GM12878 (cell line): ENCODE measurements at regions of chr17 and their contacts with region 1.

Region 1: DNA sequence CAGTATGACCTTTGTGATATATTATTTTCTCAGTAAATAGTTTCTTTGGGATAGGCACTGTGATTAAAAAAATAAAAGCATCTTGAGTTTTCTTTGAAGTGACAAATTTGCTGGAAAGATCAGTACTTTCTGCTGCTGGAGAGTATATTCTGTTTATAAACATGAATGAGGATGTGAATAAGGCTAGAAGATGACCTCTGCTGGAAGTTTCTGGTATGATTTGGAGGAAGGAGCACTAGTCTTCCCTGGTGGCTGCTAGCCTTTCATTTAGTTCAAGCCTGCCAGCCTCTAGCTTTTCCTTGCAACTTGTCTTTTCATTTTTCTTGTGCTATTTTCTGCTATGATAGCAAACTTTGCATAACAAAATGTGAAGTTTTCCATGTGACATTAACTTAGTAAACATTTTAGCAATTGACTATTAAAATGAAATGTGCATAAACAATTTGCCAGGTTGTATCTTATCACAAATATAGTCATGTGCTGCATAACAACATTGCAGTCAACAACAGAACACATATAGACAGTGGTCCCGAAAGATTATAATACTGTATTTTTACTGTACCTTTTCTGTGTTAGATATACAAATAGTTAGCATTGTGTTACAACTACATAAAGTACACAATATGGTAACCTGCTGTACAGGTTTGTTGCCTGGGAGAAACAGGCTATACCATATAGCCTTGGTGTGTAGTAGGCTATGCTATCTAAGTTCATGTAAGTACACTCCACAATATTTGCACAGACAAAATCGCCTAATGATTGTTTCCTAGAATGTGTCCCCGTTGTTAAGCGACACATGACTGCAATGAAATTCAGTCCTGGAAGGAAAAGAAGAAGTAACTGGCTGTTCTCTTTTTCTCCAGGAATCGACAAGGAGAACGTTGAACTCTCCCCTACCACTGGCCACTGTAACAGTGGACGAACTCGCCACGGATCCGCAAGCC is 18.1 kb upstream of the RAB11FIP4 start:
- DNase-seq: peak; percentile 31
- ATAC-seq: peak; percentile 92
- H3K4me3 ChIP-seq: no peak overlapping the region
- H3K27ac ChIP-seq: no peak overlapping the region
- H3K4me1 ChIP-seq: peaks cover 16% of the 10 kb centered on the region
- H3K27me3 ChIP-seq: no peaks in the 10 kb centered on the region
- CTCF ChIP-seq: peak; percentile 61 to 73 (median 70)
- EP300 ChIP-seq: no peak
- POLR2A ChIP-seq: no peak
- RAD21 ChIP-seq: peak; percentile 76

Region 2: GRCh38 chr17:31015639-31016038 is 357.8 kb before region 1 on chr17:
- CTCF ChIA-PET with region 1: interaction called, 5 read pairs
- POLR2A ChIA-PET with region 1: no interaction called
- RAD21 ChIA-PET with region 1: interaction called, 8 read pairs
- SMC1A ChIA-PET with region 1: interaction called, 4 read pairs
- in situ Hi-C with region 1: loop called (anchors 5 kb)
- intact Hi-C with region 1: loop called (anchors 5 kb)
- DNase-seq: no peak
- ATAC-seq: peak; percentile 30; the same call in 1 of the 3 replicates
- H3K4me3 ChIP-seq: no peak overlapping the region
- H3K27ac ChIP-seq: no peak overlapping the region
- H3K4me1 ChIP-seq: no peaks in the 10 kb centered on the region
- H3K27me3 ChIP-seq: no peaks in the 10 kb centered on the region
- CTCF ChIP-seq: peak in 1 of 3 experiments; percentile 13; a peak in 1 of 6 replicates
- EP300 ChIP-seq: no peak
- POLR2A ChIP-seq: no peak
- RAD21 ChIP-seq: peak; percentile 32; the same call in 1 of the 2 replicates

Region 3: DNA sequence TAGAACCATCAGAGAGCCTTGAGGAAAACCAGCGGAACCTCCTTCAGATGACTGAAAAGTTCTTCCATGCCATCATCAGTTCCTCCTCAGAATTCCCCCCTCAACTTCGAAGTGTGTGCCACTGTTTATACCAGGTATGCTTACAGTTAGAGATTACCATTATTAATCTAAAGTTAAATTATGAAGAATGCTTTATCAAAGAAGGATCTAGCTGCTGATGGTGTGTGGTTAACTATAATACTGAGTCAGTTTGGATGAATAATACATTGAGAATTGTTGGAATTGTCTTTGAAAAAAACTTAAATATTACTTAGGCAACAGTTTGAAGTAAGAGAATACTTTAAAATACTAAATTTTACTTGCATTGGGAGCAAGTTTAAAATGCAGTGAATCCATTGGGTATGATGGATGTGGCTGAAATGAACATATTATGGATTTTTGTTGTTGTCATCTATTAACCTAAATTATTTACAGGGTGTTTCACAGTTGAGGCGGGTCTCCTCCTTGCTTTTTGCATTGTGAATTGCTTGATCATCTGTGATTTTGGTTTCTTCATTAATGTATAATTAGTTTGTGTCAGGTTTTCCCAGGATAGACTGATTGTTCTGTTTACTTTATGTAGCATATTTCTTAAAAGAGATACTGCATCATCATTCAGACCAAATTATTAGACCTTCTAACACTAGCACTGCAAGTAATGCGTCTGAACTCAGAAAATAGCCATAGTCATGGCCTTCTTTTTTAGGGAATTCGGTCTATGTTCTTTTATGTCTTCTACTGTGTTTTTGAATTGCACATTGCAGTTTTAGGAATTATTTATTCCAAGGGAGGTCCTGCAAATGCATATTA is 124.2 kb before region 1 on chr17:
- CTCF ChIA-PET with region 1: interaction called, 19 read pairs
- POLR2A ChIA-PET with region 1: interaction called, 6 read pairs
- RAD21 ChIA-PET with region 1: interaction called, 3 read pairs
- SMC1A ChIA-PET with region 1: interaction called, 8 read pairs
- in situ Hi-C with region 1: no loop called
- intact Hi-C with region 1: no loop called
- DNase-seq: no peak
- ATAC-seq: no peak
- H3K4me3 ChIP-seq: no peak overlapping the region
- H3K27ac ChIP-seq: no peak overlapping the region; the same call in 1 of the 2 replicates
- H3K4me1 ChIP-seq: peaks cover 29% of the 10 kb centered on the region
- H3K27me3 ChIP-seq: no peaks in the 10 kb centered on the region
- CTCF ChIP-seq: no peak
- EP300 ChIP-seq: no peak
- POLR2A ChIP-seq: no peak
- RAD21 ChIP-seq: no peak

Region 4: DNA sequence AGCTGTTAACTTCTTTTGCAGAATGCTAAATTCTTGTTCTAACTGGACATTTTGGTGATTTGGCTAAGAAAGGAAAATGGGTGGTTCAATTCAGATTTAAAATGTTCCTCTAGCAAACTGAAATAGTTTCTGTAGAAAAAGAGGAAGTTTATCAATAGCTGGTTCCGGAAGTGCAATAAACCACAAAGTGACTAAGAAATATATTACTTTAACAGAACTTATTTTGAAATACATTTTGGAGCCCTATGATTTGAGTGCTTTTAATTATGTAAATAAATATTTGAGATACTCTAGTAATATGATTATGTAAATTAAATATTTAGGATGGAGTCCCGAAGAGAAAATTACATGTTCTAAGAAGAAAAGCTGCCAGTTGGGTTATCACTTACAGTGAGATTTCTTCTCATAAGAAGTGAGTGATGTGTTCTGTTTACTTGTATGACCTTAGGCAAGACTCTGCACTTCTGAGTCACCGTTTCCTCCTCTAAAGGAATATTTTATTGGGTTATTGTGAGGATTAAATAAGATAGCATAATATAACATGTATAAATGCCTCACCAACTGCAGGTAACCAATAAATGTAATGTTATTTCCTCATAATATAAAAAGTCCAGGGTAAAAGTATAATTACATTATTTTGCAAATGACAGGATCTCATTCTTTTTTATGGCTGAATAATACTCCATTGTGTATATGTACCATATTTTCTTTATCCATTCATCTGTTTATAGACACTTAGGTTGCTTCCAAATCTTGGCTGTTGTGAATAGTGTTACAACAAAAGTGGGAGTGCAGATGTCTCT is 59.2 kb before region 1 on chr17 and contains the start of gene EVI2B:
- CTCF ChIA-PET with region 1: interaction called, 80 read pairs
- POLR2A ChIA-PET with region 1: no interaction called
- RAD21 ChIA-PET with region 1: interaction called, 20 read pairs
- SMC1A ChIA-PET with region 1: interaction called, 86 read pairs
- in situ Hi-C with region 1: no loop called
- intact Hi-C with region 1: loop called (anchors 2 kb)
- DNase-seq: peak; percentile 66
- ATAC-seq: peak; percentile 30
- H3K4me3 ChIP-seq: peak within 1 kb of the TSS; percentile 77
- H3K27ac ChIP-seq: peak within 1 kb of the TSS; percentile 95
- H3K4me1 ChIP-seq: peaks cover 11% of the 10 kb centered on the region
- H3K27me3 ChIP-seq: no peaks in the 10 kb centered on the region
- CTCF ChIP-seq: no peak
- EP300 ChIP-seq: 0 out of 4 replicates have a peak, but pooled peaks of 1 of the 2 experiments have one; percentile 11
- POLR2A ChIP-seq: no peak
- RAD21 ChIP-seq: no peak
- polyA plus RNA-seq, gene EVI2B: 49.2 to 64.4 TPM

Region 5: GRCh38 chr17:31357831-31358394 is 15.5 kb before region 1 on chr17:
- CTCF ChIA-PET with region 1: interaction called, 7 read pairs
- POLR2A ChIA-PET with region 1: no interaction called
- RAD21 ChIA-PET with region 1: interaction called, 5 read pairs
- SMC1A ChIA-PET with region 1: interaction called, 23 read pairs
- in situ Hi-C with region 1: no loop called
- intact Hi-C with region 1: no loop called
- DNase-seq: no peak
- ATAC-seq: no peak
- H3K4me3 ChIP-seq: no peak overlapping the region
- H3K27ac ChIP-seq: no peak overlapping the region
- H3K4me1 ChIP-seq: no peaks in the 10 kb centered on the region
- H3K27me3 ChIP-seq: no peaks in the 10 kb centered on the region
- CTCF ChIP-seq: no peak
- EP300 ChIP-seq: no peak
- POLR2A ChIP-seq: no peak
- RAD21 ChIP-seq: no peak

Region 6: DNA sequence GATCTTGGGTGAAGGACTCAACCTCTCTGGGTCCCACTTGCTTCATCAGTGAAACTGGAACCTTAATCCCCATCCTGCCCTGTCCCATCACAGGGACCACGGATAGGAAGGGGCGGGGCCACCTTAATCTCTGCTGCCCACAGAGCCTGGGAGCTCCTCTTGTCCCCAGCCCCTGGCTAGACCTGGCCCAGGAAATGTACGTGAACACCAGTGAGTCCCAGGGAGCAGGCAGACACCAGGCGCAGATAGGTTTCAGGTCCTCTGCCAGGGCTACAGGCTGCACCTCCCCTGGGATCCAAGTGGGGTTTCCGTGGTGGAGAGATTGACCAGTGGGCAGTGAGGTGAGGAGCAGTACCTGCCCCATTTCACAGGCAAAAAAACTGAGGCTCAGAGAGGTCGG is 39.1 kb after region 1 on chr17:
- CTCF ChIA-PET with region 1: no interaction called
- POLR2A ChIA-PET with region 1: no interaction called
- RAD21 ChIA-PET with region 1: no interaction called
- SMC1A ChIA-PET with region 1: no interaction called
- in situ Hi-C with region 1: no loop called
- intact Hi-C with region 1: no loop called
- DNase-seq: no peak
- ATAC-seq: peak; percentile 30; the same call in 1 of the 3 replicates
- H3K4me3 ChIP-seq: no peak overlapping the region
- H3K27ac ChIP-seq: no peak overlapping the region
- H3K4me1 ChIP-seq: no peaks in the 10 kb centered on the region
- H3K27me3 ChIP-seq: no peaks in the 10 kb centered on the region
- CTCF ChIP-seq: no peak
- EP300 ChIP-seq: no peak
- POLR2A ChIP-seq: no peak
- RAD21 ChIP-seq: no peak